ENCODE measurements at regions of chr11 and their contacts with region 1.

Region 1: DNA sequence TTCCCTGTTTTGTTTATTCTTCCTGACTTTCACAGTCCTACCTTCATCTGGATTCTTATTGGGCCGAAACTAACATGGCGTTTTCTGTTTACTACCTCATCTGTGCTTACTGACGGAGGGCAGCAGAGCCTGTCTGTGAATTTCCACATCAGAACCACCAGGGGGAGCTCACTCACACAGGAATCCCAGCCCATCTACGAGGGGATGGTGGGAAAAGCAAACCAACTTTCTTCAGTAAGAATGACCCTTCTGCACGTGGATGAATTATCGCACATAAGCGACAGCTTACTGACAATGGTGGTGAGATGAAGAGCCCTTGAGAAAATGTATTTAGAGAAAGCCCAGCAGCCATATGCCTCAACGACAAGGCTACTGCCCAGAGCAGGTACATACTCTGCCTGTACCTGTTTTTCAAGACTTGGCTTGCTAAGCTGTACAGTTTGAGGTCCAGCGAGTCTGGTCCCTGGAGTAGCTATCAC is 42.5 kb downstream of the LARGE2 start:
- DNase-seq: peak; percentile 46
- ATAC-seq: peak; percentile 89 to 90

Region 2: GRCh38 chr11:46315033-46315738 is 350.2 kb after region 1 on chr11:
- intact Hi-C with region 1: loop called in 1 of 2 experiments (anchors 10 kb)
- DNase-seq: peak; percentile 77
- ATAC-seq: peak; percentile 55 to 69